Panc1 (cell line): ENCODE measurements at regions of chr10 and their contacts with region 1.

Region 1: DNA sequence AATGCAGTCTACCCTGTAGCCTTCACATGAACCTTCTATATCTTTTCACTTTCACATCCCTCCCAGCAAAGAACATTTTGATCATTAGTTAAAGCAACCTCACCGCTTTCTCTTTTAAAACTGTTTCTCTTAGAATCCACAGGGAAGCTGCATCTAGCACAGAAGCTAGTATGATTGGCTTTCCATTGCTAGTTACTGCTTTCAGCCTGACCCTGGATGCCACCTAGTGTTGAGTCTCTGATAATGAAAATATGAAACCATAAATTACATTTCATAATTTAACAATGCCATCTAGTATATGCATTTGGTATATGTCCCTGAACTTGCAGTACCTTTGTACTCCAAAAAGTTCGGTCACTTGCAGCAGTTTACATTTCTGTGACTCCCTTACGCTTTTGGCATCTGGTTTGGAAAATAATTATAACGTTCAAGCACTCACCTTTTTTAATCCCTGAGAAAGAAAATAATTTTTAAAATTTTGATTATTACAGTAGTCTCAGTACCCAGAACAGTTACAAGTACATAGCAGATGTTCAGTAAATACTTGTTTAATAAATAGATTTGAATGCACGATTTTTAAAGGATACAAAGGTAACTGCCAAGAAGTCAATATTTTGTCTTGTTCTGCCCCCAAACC is 22.7 kb downstream of the CISD1 start:
- DNase-seq: peak; percentile 27
- ATAC-seq: peak; percentile 85
- H3K4me3 ChIP-seq: no peak overlapping the region
- H3K27ac ChIP-seq: no peak overlapping the region
- H3K4me1 ChIP-seq: no peaks in the 10 kb centered on the region
- H3K27me3 ChIP-seq: no peaks in the 10 kb centered on the region
- CTCF ChIP-seq: peak; percentile 80; the same call in 1 of the 2 replicates

Region 2: DNA sequence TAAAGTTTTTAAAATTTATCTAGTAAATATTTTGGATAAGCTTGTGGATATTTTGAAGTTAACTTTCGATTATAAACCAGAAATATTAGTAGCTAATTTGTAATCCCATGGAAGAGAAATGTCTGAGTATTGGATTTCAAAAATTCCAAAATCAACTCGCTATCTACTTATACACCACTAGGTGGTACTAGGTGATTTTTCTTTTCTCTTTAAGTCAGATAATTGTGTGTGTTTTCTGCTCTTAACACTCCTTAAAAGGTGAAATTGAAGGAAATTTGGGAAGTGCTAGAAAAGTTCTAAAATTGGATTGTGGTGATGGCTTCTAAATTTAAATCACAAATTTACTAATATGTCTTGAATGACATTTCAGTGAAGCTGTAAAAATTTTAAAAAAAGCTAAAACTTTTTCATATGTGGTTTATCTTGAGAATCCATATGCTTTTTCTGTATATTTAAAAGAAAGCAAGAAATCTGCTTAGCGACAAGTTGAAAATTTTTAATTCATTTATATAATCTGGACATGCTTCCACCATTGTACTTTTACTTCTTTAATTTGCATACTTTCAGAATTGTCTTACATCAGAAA is 114.2 kb before region 1 on chr10:
- CTCF ChIA-PET with region 1: interaction called, 14 read pairs
- POLR2A ChIA-PET with region 1: no interaction called
- in situ Hi-C with region 1: no loop called
- intact Hi-C with region 1: loop called (anchors 1 kb)
- DNase-seq: no peak
- ATAC-seq: no peak
- H3K4me3 ChIP-seq: no peak overlapping the region
- H3K27ac ChIP-seq: no peak overlapping the region
- H3K4me1 ChIP-seq: no peaks in the 10 kb centered on the region
- H3K27me3 ChIP-seq: no peaks in the 10 kb centered on the region; the same call in 1 of the 2 replicates
- CTCF ChIP-seq: peak; percentile 69; the same call in 1 of the 2 replicates

Region 3: GRCh38 chr10:58424176-58424575 is 132.5 kb after region 1 on chr10:
- CTCF ChIA-PET with region 1: no interaction called
- POLR2A ChIA-PET with region 1: no interaction called
- in situ Hi-C with region 1: no loop called
- intact Hi-C with region 1: no loop called
- DNase-seq: no peak
- ATAC-seq: no peak
- H3K4me3 ChIP-seq: no peak overlapping the region
- H3K27ac ChIP-seq: no peak overlapping the region
- H3K4me1 ChIP-seq: no peaks in the 10 kb centered on the region
- H3K27me3 ChIP-seq: no peaks in the 10 kb centered on the region
- CTCF ChIP-seq: no peak